ENCODE measurements at regions of chr18 and their contacts with region 1.

Region 1: GRCh38 chr18:61502472-61502871 is 169.2 kb downstream of the CDH20 start:
- DNase-seq: no peak
- H3K4me3 Mint-ChIP-seq: no peak overlapping the region
- H3K27ac Mint-ChIP-seq: no peak overlapping the region
- H3K4me1 Mint-ChIP-seq: no peaks in the 10 kb centered on the region
- H3K27me3 Mint-ChIP-seq: peaks cover 2% of the 10 kb centered on the region

Region 2: GRCh38 chr18:61085761-61086160 is 416.7 kb before region 1 on chr18:
- intact Hi-C with region 1: loop called (anchors 5 kb)
- DNase-seq: no peak
- H3K4me3 Mint-ChIP-seq: no peak overlapping the region
- H3K27ac Mint-ChIP-seq: no peak overlapping the region
- H3K4me1 Mint-ChIP-seq: no peaks in the 10 kb centered on the region
- H3K27me3 Mint-ChIP-seq: no peaks in the 10 kb centered on the region

Region 3: DNA sequence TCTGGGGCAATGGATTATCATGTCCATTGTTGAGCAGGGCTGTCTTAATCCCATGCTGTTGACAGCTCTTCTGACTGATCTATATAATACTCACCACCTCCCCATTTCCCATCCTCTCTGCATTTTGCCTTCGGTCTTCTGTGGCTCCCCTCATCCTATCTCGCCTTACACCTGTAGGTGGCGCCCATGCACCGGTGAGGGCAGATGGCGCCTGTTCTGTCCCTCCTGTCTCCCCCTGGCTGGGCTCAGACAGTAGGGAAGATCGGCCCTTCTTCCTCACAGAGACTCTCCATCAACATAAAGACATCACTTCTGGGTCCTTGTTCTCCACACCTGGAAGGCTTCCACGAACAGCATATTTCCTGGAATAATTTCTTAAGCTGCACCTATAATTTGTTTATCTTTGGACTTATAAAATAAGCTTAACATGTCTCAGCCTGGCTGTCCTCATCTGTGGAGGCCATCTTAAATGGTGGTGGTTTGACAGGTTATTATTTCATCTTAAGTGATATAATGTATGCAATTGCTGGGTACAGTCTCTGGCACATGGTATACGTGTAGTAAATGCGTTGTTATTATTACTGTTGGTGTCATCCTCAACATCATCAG is 180.1 kb before region 1 on chr18:
- intact Hi-C with region 1: loop called (anchors 2 kb)
- DNase-seq: peak; percentile 16
- H3K4me3 Mint-ChIP-seq: no peak overlapping the region
- H3K27ac Mint-ChIP-seq: no peak overlapping the region
- H3K4me1 Mint-ChIP-seq: no peaks in the 10 kb centered on the region
- H3K27me3 Mint-ChIP-seq: no peaks in the 10 kb centered on the region

Region 4: DNA sequence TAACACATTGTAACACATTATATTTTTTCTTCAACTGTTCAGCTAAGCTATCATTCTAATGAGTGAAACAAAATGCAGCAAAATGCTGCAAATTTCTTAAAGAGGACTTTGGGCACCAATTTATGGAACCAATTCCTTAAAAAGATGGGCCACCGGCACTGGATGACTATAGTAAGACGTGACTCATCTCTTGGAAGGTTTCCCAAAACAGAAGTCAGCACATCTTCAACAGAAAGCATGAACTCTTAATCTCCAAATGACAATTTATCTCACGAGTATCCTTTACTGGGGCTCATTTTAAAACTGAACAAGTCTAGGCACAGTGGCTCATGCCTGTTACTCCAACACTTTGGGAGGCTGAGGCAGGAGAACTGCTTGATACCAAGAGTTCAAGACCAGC is 44.1 kb after region 1 on chr18:
- intact Hi-C with region 1: no loop called
- DNase-seq: no peak
- H3K4me3 Mint-ChIP-seq: no peak overlapping the region
- H3K27ac Mint-ChIP-seq: no peak overlapping the region
- H3K4me1 Mint-ChIP-seq: no peaks in the 10 kb centered on the region
- H3K27me3 Mint-ChIP-seq: no peaks in the 10 kb centered on the region

Region 5: DNA sequence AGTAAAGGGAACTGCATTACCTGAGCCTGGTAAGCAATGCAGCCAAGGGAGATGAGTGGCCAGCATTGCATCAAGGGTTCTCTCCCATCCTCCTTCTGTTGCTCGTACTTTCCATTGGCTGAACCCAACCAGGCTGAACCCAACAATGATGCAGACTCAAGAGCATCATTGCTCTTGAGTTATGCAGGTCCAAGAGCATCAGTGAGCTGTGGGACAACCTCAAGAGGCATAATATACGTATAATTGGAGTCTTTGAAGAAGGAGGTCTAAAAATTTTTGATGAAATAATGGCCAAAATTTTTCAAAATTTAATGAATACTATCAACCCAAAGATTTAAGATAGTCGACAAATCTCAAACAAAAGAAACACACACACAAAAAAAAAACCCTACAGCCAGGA is 177.4 kb after region 1 on chr18:
- intact Hi-C with region 1: no loop called
- DNase-seq: no peak
- H3K4me3 Mint-ChIP-seq: no peak overlapping the region
- H3K27ac Mint-ChIP-seq: no peak overlapping the region
- H3K4me1 Mint-ChIP-seq: no peaks in the 10 kb centered on the region
- H3K27me3 Mint-ChIP-seq: no peaks in the 10 kb centered on the region